Mammary epithelial cell (primary cell): ENCODE measurements at regions of chr16 and their contacts with region 1.

Region 1: DNA sequence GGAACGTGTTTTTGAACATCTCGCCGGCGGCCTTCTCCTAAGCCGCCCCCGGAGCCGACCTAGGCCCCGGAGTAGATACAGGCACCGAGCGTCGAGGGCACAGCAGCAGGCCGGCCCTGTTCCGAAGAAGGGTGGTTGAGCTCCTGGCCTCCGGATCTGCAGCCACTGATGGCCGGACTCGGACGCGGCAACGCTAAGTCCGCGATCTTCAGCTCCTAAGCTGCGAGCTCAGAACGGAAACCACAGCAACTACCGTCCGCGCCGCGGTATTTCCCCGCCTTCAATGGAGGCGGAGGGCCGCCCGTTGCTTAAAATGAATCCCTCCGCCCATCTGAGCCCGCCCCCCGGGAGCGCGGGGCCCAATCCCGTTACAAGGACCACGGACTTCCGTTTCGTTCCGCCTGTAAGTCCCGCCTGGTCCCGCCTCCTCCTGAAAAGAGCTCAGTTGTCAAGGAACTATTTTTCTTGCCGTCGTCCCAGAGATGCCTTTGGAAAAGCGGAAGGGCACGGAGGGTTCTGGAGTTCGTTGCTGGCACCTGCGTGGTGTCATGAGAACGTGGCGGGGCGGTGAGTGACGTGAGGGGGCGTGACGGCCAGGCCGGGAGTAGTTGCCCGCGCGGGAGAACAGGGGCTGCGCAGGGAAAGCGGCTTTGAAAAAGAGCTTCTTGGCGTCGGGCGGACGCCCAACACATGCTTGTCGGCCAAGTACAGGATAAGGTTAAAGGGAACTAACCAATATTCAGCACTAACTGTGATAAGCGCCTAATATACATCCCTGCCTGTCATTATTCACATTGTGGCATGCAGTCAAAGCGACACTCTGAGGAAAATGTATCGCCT is at the start of gene CFAP20:
- DNase-seq: peak; percentile 100
- H3K4me3 ChIP-seq: peak within 1 kb of the TSS; percentile 76 to 98 (median 78)
- H3K27ac ChIP-seq: peak within 1 kb of the TSS; percentile 78
- H3K4me1 ChIP-seq: peaks cover 26% of the 10 kb centered on the region
- H3K27me3 ChIP-seq: no peaks in the 10 kb centered on the region
- CTCF ChIP-seq: no peak
- total RNA-seq, gene CFAP20: 40.7 to 43.6 TPM

Region 2: DNA sequence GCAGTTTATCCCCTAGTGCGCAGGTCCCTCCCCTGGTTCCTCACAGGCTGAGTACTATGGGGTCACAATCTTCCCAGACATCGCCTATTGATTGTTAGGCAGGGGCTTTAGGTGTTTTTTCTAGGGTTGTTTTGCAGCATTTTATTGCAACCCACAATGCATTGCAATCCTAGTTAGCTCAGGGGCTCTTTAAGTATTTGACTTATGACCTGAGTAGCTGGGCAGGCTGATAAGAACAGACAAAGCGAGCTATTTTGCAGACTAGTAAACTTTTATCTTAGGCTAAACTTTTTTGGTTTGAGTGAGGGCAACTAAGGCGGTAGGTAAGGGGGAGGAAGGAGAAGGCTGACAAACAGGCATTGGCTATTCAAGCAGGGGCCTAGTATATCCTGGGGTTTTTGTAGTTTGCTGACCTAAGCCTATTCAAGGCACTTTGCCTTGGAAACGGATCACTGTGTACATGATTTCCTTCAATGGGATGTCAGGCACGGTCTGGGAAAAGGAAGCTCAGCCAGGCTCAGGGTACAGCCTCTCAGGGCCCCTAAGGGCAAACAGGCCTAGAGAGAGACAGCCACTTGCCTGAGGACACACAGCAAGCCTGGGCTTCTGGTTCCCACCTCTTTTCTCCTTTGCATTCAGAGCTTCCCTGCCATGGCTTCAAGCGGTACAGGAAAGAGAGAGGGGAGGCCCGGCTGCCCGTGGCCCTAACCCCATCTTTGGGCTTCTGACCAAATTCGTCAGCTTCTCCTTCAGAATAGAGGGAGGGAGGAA is 428.4 kb before region 1 on chr16:
- CTCF ChIA-PET with region 1: no interaction called
- dilution Hi-C with region 1: no loop called
- in situ Hi-C with region 1: no loop called
- intact Hi-C with region 1: no loop called
- DNase-seq: no peak
- H3K4me3 ChIP-seq: no peak overlapping the region
- H3K27ac ChIP-seq: no peak overlapping the region
- H3K4me1 ChIP-seq: no peaks in the 10 kb centered on the region
- H3K27me3 ChIP-seq: no peaks in the 10 kb centered on the region
- CTCF ChIP-seq: no peak

Region 3: DNA sequence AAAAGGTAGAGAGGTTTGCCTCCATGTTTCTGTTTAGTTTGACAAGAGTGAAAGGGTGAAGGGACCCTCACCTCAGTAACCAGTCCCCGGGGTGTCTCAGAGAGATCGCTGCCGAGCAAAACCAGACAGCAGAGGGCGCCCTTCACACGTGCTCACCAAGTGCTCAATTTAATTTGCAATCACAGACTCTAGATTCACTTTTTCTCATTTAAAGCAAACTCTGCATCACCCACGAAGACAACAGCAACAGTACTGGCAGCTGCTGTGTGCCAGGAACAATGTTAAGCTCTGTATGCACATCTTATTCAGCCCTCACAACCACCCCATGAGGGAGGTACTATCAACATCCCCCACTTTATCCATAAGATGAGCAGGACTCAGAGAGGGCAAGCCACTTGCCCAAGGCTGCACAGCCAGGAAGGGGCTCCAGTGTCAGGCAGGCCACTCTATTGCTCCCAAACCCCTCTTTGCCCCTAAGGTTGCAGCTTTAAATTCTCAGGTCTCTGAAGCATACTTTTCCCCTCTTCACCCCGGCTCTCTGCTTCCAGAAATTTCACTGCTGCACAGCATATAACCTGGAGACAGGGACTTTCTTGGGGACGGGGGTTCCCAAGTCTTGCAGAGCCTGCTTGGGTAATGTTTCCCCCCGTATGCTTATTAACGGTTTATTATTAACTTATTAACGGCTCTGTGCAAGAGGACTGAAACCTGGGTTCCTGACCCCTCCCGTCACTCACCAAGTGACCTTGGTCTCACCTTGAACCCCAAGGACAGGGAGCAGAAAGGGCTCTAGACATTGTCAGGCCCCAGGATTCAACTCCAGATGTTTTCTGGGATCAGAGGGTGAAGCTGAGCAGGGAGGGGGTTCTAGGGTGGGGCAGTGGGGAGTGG is 229.3 kb before region 1 on chr16:
- CTCF ChIA-PET with region 1: no interaction called
- dilution Hi-C with region 1: loop called (anchors 10 kb)
- in situ Hi-C with region 1: no loop called
- intact Hi-C with region 1: loop called (anchors 5 kb)
- DNase-seq: peak; percentile 42
- H3K4me3 ChIP-seq: no peak overlapping the region
- H3K27ac ChIP-seq: no peak overlapping the region
- H3K4me1 ChIP-seq: peaks cover 3% of the 10 kb centered on the region
- H3K27me3 ChIP-seq: no peaks in the 10 kb centered on the region
- CTCF ChIP-seq: peak; percentile 90 to 95

Region 4: GRCh38 chr16:57906382-57907316 is 222.7 kb before region 1 on chr16:
- CTCF ChIA-PET with region 1: no interaction called
- dilution Hi-C with region 1: loop called (anchors 10 kb)
- in situ Hi-C with region 1: no loop called
- intact Hi-C with region 1: loop called (anchors 5 kb)
- DNase-seq: no peak
- H3K4me3 ChIP-seq: no peak overlapping the region
- H3K27ac ChIP-seq: no peak overlapping the region
- H3K4me1 ChIP-seq: peaks cover 1% of the 10 kb centered on the region
- H3K27me3 ChIP-seq: no peaks in the 10 kb centered on the region
- CTCF ChIP-seq: peak; percentile 54 to 75

Region 5: DNA sequence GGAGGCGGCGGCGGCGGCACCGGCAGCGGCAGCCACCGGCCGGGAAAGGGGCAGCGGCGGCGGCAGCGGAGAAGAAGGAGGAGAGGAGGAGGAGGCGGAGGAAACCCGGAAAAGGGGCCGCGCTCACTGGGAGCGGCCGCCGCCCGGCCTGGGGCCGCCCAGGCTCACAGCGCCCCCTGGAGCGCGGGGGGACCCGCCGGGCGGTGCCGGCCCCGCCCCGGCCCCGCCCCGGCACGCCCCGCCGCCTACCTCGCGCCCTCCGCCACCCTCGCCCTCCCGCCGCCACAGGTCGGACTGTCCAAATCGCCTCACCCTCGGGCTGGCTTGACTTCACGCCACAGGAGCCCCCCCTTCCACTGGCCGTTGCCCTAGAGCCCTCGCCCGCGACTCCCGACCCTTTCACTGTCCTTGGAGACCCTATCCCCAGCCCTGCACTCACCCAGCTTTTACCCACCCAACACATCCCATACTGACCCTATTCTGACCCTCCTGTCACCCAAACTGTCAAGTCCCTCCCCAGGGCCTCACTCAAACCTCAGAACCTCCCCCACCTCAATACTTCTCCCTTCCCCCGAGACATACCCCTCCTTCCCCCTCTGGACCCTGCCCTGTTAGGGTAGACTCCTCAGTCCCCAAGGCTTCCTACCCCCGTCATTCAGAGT is 68.8 kb after region 1 on chr16 and contains the start of gene CSNK2A2:
- CTCF ChIA-PET with region 1: no interaction called
- dilution Hi-C with region 1: no loop called
- in situ Hi-C with region 1: no loop called
- intact Hi-C with region 1: loop called (anchors 2 kb)
- DNase-seq: peak; percentile 59
- H3K4me3 ChIP-seq: peak within 1 kb of the TSS; percentile 74 to 88 (median 82)
- H3K27ac ChIP-seq: no peak within 1 kb of the TSS
- H3K4me1 ChIP-seq: peaks cover 16% of the 10 kb centered on the region
- H3K27me3 ChIP-seq: no peaks in the 10 kb centered on the region
- CTCF ChIP-seq: peak; percentile 31 to 50
- total RNA-seq, gene CSNK2A2: 29.3 to 79.7 TPM

Region 6: DNA sequence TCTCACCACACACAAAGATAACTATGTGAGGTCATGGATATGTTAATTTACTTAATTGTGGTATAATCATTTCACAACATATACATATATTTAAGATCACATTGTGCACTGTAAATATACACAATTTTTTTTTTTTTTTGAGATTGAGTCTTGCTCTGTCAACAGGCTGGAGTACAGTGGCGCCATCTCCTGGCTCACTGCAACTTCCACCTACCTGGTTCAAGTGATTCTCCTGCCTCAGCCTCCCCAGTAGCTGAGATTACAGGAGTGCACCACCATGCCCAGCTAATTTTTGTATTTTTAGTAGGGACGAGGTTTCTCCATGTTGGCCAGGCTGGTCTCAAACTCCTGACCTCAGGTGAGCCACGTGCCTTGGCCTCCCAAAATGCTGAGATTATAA is 177.0 kb after region 1 on chr16:
- CTCF ChIA-PET with region 1: no interaction called
- dilution Hi-C with region 1: no loop called
- in situ Hi-C with region 1: no loop called
- intact Hi-C with region 1: loop called (anchors 5 kb)
- DNase-seq: peak; percentile 21
- H3K4me3 ChIP-seq: no peak overlapping the region
- H3K27ac ChIP-seq: no peak overlapping the region
- H3K4me1 ChIP-seq: no peaks in the 10 kb centered on the region
- H3K27me3 ChIP-seq: no peaks in the 10 kb centered on the region
- CTCF ChIP-seq: peak; percentile 46 to 69

Region 7: DNA sequence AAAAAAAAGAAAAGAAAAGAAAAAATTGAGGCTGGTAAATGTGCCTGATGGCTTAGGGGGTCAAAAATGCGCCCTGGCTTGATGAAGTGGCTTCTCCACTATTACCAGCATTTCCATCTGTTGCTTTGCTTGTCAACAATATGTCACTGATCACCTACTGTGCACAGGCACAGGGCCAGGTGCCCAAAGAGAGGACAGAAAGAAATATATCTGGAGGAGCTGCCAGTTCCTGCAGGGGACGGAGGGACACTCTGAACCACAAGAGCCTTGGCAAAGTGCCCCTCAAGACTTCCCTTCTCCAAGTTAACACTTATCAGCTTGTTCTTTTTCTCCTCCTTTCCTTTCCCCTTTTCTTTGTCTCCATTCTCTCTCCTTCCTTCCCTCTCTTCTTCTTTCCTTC is 297.6 kb after region 1 on chr16:
- CTCF ChIA-PET with region 1: no interaction called
- dilution Hi-C with region 1: no loop called
- in situ Hi-C with region 1: no loop called
- intact Hi-C with region 1: no loop called
- DNase-seq: no peak
- H3K4me3 ChIP-seq: no peak overlapping the region
- H3K27ac ChIP-seq: no peak overlapping the region
- H3K4me1 ChIP-seq: peaks cover under 1% of the 10 kb centered on the region
- H3K27me3 ChIP-seq: peaks cover 2% of the 10 kb centered on the region
- CTCF ChIP-seq: no peak